ENCODE measurements at regions of chr1 and their contacts with region 1.

Region 1: DNA sequence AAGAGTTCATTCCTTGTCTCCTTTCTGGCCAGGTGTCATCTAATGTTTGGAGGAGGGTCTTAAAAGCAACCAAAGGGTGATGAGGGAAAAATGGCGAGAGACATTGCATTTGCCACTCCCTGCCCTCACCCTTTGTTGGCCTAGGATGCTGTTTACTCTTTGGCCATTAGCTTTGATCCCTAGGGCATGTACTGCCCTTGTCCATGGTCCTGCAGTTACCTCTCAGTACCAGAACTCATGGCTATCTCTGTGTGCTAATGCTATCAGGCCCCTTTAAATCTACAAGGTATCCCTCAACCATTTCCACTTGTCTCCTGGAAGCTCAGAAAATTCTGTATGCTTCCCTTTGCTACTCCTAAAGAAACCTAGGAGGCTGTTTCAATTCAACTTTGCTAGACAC is 424.8 kb upstream of the PLXNA2 start:
- DNase-seq: no peak
- H3K4me3 ChIP-seq: no peak overlapping the region
- CTCF ChIP-seq: no peak
- POLR2A ChIP-seq: no peak

Region 2: DNA sequence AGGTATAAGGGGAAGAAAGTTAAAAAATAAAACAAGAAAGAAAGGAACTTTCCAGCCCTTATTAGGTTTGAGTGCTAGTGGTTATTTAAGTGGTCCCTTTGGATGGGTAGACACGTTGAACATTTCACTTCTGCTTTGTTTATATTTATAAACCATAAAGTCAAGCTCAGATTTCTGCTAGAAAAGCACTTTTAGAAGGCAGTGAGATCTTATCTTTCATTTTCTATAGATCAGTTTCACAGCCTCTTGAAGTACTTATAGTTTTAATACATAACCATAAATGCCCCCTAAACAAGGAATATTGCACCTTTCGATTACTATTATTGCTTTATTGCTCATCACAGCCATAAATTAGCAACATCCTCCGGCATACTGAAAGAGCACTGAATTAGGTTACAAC is 22.0 kb after region 1 on chr1:
- intact Hi-C with region 1: loop called (anchors 2 kb)
- DNase-seq: no peak
- H3K4me3 ChIP-seq: no peak overlapping the region
- CTCF ChIP-seq: no peak
- POLR2A ChIP-seq: no peak

Region 3: DNA sequence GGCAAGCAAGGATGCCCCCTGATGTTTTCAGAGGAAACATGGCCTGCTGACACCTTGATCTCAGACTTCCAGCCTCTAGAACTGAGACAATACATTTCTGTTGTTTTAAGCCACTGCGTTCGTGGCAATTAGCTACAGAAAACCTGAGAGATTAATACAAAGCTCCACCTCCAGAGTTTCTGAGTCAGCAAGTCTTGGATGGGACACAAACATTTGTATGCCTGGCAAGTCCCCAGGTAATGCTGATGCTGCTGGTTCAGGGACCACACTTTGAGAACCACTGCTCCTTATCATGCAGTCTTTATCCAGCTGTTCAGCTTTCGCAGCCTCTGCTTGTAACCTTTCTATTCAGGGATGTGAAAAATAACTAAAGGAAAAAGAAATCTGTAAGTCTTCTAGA is 140.9 kb after region 1 on chr1:
- intact Hi-C with region 1: no loop called
- DNase-seq: peak in 1 of 2 donors; percentile 21
- H3K4me3 ChIP-seq: no peak overlapping the region
- CTCF ChIP-seq: no peak
- POLR2A ChIP-seq: no peak

Measured in lower leg skin (tissue), 4 donors.